ENCODE measurements at regions of chr6 and their contacts with region 1.

Region 1: DNA sequence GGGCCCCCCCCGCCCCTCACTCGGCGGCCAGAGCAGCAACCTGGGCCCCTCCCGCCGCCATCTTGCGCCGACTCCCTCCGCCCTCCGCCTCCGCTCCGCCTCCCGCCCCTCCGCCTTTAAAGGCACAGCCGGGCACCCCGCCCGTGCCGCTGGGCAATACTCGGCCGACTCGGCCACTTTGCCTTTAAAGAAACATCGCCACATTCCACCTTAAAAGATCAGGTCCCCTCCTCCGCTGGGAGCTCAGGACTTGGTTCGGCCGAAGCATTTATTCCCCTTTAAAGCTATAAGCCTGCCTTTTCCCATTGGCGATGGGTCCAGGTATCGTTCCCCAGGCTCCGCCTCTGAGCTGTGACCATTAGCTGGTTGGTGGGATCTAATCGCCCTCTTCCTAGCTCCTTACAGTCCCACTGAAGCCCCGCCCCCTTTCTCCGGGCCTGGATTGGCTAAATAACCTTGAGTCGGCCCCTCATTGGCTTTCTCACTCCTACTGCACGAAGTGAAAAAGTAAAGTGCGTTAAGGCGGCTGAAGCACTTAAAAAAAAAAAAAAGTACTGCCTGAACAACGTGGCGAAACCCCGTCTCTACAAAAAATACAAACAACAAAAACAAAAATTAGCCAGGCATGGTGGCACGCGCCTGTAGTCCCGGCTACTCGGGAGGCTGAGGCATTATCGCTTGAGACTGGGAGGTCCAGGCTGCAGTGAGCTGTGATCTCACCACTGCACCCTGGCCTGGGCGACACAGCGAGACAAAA is at the start of gene ZBTB22:
- DNase-seq: peak; percentile 91
- ATAC-seq: peak; percentile 59
- H3K4me3 Mint-ChIP-seq: peak within 1 kb of the TSS; percentile 99
- H3K27ac Mint-ChIP-seq: peak within 1 kb of the TSS; percentile 98
- H3K4me1 Mint-ChIP-seq: peaks cover 84% of the 10 kb centered on the region
- H3K27me3 Mint-ChIP-seq: no peaks in the 10 kb centered on the region
- CTCF ChIP-seq: no peak
- total RNA-seq, gene ZBTB22: 31.6 and 31.8 TPM in 2 replicates

Region 2: DNA sequence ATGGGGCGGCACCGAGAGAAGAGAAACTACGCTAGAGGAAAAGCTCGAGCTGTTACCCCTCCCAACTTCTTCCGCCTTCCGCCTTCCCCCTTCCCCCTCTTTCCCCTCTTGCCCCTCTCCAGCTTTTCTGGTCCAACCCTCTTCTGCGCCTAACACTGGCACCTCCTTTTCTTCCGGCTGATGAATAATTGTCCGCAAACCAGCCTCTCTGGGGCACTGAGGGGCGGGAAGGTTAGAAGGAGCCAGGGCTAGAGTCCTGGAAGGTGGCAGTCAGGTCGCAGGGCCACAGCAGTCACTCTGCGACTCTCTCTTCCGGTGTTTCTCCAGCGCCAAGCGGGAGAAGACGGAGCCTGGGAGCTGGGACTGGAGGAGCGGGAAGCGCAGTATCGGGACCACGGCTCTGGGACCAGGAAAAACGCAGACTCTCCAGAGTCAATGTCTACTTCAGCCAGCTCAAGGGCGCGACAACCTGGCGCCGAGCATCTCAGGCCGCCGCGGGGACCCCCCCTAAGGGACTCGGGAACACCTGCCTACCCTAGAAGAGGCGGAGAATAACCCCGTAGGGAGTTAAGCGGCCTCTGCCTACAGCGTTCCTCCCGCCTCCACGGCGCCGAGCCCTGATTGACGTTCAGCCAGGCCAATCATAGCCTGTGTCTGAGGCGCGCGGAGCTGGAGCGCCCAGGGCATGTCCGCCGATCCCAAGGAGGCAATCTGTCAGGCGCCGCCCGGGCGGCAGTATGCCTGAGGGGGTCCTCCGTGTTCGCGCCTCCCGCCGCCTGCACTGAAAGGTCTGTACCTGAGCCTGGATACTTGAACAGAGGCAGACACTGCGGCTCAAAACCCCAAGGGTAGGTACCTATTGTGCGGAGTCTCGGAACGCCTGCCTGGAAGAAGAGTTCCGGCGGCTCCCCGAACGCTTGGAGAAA is 423.5 kb before region 1 on chr6:
- CTCF ChIA-PET with region 1: no interaction called
- POLR2A ChIA-PET with region 1: no interaction called
- intact Hi-C with region 1: no loop called
- DNase-seq: peak; percentile 96
- ATAC-seq: peak; percentile 97
- H3K4me3 Mint-ChIP-seq: peak overlapping the region; percentile 99
- H3K27ac Mint-ChIP-seq: peak overlapping the region; percentile 97
- H3K4me1 Mint-ChIP-seq: peaks cover 70% of the 10 kb centered on the region
- H3K27me3 Mint-ChIP-seq: no peaks in the 10 kb centered on the region
- CTCF ChIP-seq: no peak

Region 3: DNA sequence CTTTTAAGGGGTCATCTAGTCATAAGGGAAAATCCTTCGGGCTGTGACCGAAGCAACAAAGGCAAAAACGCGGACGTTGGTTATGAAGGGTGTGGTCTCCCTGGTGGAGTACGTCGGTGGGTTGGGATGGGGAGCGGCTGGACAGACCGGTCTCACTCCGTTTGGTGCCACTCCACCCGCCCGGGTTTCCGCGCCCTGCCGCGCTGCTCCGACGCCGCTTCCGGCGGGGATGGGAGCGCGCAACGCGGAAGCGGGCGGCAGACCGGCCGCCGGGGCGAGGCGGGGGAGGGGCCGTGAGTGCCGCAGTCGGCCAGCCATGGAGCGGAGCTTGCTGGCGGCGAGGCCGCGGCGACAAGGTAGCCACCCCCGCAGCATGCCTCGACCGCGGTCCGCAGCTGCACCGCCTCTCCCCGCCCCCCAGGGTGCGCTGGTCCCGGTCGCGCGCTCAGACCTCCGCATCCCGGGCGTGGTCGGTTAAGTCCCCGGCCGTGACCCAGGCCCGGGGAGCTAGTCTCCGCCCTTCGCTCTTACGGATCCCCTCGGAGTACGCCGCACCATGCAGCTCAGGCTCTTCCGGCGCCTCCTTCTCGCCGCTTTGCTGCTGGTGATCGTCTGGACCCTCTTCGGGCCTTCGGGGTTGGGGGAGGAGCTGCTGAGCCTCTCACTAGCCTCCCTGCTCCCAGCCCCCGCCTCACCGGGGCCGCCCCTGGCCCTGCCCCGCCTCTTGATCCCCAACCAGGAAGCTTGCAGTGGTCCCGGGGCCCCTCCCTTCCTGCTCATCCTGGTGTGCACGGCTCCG is 40.8 kb before region 1 on chr6 and contains the start of gene B3GALT4:
- CTCF ChIA-PET with region 1: interaction called, 12 read pairs
- POLR2A ChIA-PET with region 1: interaction called, 41 read pairs
- intact Hi-C with region 1: loop called (anchors 2 kb)
- DNase-seq: peak; percentile 77
- ATAC-seq: peak; percentile 68
- H3K4me3 Mint-ChIP-seq: peak within 1 kb of the TSS; percentile 92
- H3K27ac Mint-ChIP-seq: peak within 1 kb of the TSS; percentile 100
- H3K4me1 Mint-ChIP-seq: peaks cover 62% of the 10 kb centered on the region
- H3K27me3 Mint-ChIP-seq: no peaks in the 10 kb centered on the region
- CTCF ChIP-seq: no peak
- total RNA-seq, gene B3GALT4: 19.1 and 19.4 TPM in 2 replicates

Region 4: GRCh38 chr6:33329058-33329457 is 11.2 kb after region 1 on chr6:
- CTCF ChIA-PET with region 1: no interaction called
- POLR2A ChIA-PET with region 1: interaction called, 12 read pairs
- intact Hi-C with region 1: no loop called
- DNase-seq: no peak
- ATAC-seq: no peak
- H3K4me3 Mint-ChIP-seq: no peak overlapping the region
- H3K27ac Mint-ChIP-seq: peak overlapping the region; percentile 57
- H3K4me1 Mint-ChIP-seq: peaks cover 49% of the 10 kb centered on the region
- H3K27me3 Mint-ChIP-seq: no peaks in the 10 kb centered on the region
- CTCF ChIP-seq: no peak

Region 5: DNA sequence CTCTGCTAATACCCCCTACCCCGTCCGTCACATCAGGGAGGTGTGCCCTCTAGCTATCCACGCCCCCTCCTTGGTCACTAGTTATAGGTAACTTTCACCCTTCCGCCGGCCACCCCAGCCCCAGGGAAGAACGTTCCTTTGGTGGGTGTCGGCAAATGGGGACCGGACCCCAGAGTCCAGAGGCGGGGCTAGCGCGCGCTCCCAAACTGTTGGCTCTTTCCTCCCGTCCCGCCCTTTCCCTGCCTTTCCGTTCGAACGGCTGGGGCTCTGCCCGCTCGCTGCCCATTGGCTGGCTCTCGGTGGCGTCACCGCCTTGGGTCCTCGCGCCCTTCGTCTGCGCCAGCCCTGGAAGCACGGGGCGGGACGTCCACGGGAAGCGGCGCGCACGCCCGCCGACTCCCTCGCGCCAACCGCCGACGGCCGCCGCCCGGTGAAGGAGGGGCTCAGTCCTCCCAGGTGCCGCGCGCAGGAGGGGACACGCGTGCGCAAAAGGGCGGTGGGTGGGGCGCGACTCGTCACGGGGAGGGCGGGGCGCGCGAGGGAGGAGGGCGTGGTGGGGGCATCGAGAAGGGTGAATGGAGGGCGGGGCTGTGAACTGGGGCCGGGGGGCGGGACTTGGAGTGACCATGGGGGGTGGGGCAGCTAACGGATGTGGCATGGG is 92.3 kb after region 1 on chr6:
- CTCF ChIA-PET with region 1: no interaction called
- POLR2A ChIA-PET with region 1: interaction called, 21 read pairs
- intact Hi-C with region 1: no loop called
- DNase-seq: peak; percentile 93
- ATAC-seq: peak; percentile 74
- H3K4me3 Mint-ChIP-seq: peak overlapping the region; percentile 88
- H3K27ac Mint-ChIP-seq: peak overlapping the region; percentile 87
- H3K4me1 Mint-ChIP-seq: peaks cover 47% of the 10 kb centered on the region
- H3K27me3 Mint-ChIP-seq: no peaks in the 10 kb centered on the region
- CTCF ChIP-seq: no peak

Region 6: GRCh38 chr6:33454009-33454946 is 136.4 kb after region 1 on chr6 and contains the start of gene ZBTB9:
- CTCF ChIA-PET with region 1: no interaction called
- POLR2A ChIA-PET with region 1: interaction called, 6 read pairs
- intact Hi-C with region 1: loop called (anchors 1 kb)
- DNase-seq: peak; percentile 87
- ATAC-seq: peak; percentile 100
- H3K4me3 Mint-ChIP-seq: peak within 1 kb of the TSS; percentile 97
- H3K27ac Mint-ChIP-seq: peak within 1 kb of the TSS; percentile 88
- H3K4me1 Mint-ChIP-seq: peaks cover 26% of the 10 kb centered on the region
- H3K27me3 Mint-ChIP-seq: no peaks in the 10 kb centered on the region
- CTCF ChIP-seq: no peak
- total RNA-seq, gene ZBTB9: 10.7 and 12.5 TPM in 2 replicates

Region 7: GRCh38 chr6:33613795-33614168 is 295.9 kb after region 1 on chr6:
- CTCF ChIA-PET with region 1: no interaction called
- POLR2A ChIA-PET with region 1: no interaction called
- intact Hi-C with region 1: no loop called
- DNase-seq: no peak
- ATAC-seq: no peak
- H3K4me3 Mint-ChIP-seq: no peak overlapping the region
- H3K27ac Mint-ChIP-seq: no peak overlapping the region
- H3K4me1 Mint-ChIP-seq: peaks cover 9% of the 10 kb centered on the region
- H3K27me3 Mint-ChIP-seq: no peaks in the 10 kb centered on the region
- CTCF ChIP-seq: no peak